ENCODE measurements at regions of chr12 and their contacts with region 1.

Region 1: GRCh38 chr12:110776410-110776809 is 33.7 kb upstream of the PPP1CC start:
- DNase-seq: peak; percentile 43
- H3K4me3 Mint-ChIP-seq: peak overlapping the region; percentile 40
- H3K27ac Mint-ChIP-seq: peak overlapping the region; percentile 99
- H3K4me1 Mint-ChIP-seq: peaks cover 72% of the 10 kb centered on the region
- H3K27me3 Mint-ChIP-seq: no peaks in the 10 kb centered on the region

Region 2: GRCh38 chr12:110065540-110065939 is 710.9 kb before region 1 on chr12:
- intact Hi-C with region 1: loop called (anchors 1 kb)
- DNase-seq: no peak
- H3K4me3 Mint-ChIP-seq: no peak overlapping the region
- H3K27ac Mint-ChIP-seq: peak overlapping the region; percentile 24
- H3K4me1 Mint-ChIP-seq: peaks cover 33% of the 10 kb centered on the region
- H3K27me3 Mint-ChIP-seq: peaks cover 2% of the 10 kb centered on the region

Region 3: GRCh38 chr12:110613771-110614684 is 162.4 kb before region 1 on chr12 and contains the start of gene TCTN1:
- intact Hi-C with region 1: loop called (anchors 1 kb)
- DNase-seq: peak; percentile 98
- H3K4me3 Mint-ChIP-seq: peak within 1 kb of the TSS; percentile 83
- H3K27ac Mint-ChIP-seq: peak within 1 kb of the TSS; percentile 81
- H3K4me1 Mint-ChIP-seq: peaks cover 8% of the 10 kb centered on the region
- H3K27me3 Mint-ChIP-seq: peaks cover 4% of the 10 kb centered on the region
- total RNA-seq, gene TCTN1: 7.6 and 8.8 TPM in 2 replicates

Region 4: GRCh38 chr12:110619534-110619953 is 156.9 kb before region 1 on chr12:
- intact Hi-C with region 1: loop called (anchors 1 kb)
- DNase-seq: no peak
- H3K4me3 Mint-ChIP-seq: peak overlapping the region; percentile 37
- H3K27ac Mint-ChIP-seq: peak overlapping the region; percentile 77
- H3K4me1 Mint-ChIP-seq: peaks cover 10% of the 10 kb centered on the region
- H3K27me3 Mint-ChIP-seq: peaks cover 4% of the 10 kb centered on the region

Region 5: GRCh38 chr12:110762891-110763290 is 13.5 kb before region 1 on chr12:
- intact Hi-C with region 1: loop called (anchors 1 kb)
- DNase-seq: no peak
- H3K4me3 Mint-ChIP-seq: peak overlapping the region; percentile 69
- H3K27ac Mint-ChIP-seq: peak overlapping the region; percentile 90
- H3K4me1 Mint-ChIP-seq: peaks cover 27% of the 10 kb centered on the region
- H3K27me3 Mint-ChIP-seq: peaks cover 5% of the 10 kb centered on the region

Region 6: GRCh38 chr12:110790301-110790700 is 13.9 kb after region 1 on chr12:
- intact Hi-C with region 1: loop called (anchors 1 kb)
- DNase-seq: no peak
- H3K4me3 Mint-ChIP-seq: no peak overlapping the region
- H3K27ac Mint-ChIP-seq: no peak overlapping the region
- H3K4me1 Mint-ChIP-seq: peaks cover 22% of the 10 kb centered on the region
- H3K27me3 Mint-ChIP-seq: no peaks in the 10 kb centered on the region

Region 7: GRCh38 chr12:110813285-110813684 is 36.9 kb after region 1 on chr12:
- intact Hi-C with region 1: no loop called
- DNase-seq: no peak
- H3K4me3 Mint-ChIP-seq: no peak overlapping the region
- H3K27ac Mint-ChIP-seq: no peak overlapping the region
- H3K4me1 Mint-ChIP-seq: peaks cover 8% of the 10 kb centered on the region
- H3K27me3 Mint-ChIP-seq: peaks cover 9% of the 10 kb centered on the region

Region 8: DNA sequence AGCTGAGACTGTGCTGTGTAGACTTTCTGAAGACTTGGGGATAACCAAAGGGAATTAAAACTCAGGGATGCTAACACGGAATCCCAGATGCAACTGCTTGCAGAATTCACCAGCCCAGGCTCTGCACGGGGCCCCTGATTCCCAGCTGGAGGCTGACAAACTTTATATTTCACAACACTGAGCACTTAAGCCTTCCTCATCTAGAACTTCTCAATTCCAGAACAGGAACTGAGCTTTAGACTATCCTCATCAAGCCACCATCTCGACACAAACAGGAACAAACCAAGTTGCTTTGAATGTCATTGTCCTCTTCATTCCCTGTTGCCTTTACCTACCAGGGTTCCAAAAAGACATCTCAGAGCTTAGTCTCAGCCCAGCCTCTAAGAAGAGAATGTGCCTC is 92.6 kb after region 1 on chr12:
- intact Hi-C with region 1: no loop called
- DNase-seq: no peak
- H3K4me3 Mint-ChIP-seq: no peak overlapping the region
- H3K27ac Mint-ChIP-seq: no peak overlapping the region
- H3K4me1 Mint-ChIP-seq: no peaks in the 10 kb centered on the region
- H3K27me3 Mint-ChIP-seq: peaks cover 4% of the 10 kb centered on the region

Region 9: DNA sequence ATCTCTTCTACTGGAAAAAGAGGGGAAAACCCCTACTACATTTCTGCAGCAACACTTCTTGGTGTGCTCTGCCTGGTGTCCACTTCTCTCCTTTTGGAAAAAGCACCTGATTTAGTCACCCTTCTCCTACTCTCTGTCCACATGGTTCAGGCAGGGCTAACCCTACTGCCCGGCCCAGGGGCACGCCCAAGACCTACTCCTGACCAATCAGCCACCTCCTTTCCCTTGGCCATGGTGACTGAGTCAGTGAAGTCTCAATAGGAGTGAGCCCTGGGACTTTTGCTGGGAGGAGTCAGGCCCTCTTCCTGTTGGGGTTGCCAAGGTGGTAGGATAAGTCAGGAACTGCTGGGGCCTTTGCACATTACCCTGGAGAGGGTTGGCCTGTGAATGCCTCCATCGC is 196.5 kb after region 1 on chr12:
- intact Hi-C with region 1: no loop called
- DNase-seq: no peak
- H3K4me3 Mint-ChIP-seq: no peak overlapping the region
- H3K27ac Mint-ChIP-seq: no peak overlapping the region
- H3K4me1 Mint-ChIP-seq: no peaks in the 10 kb centered on the region
- H3K27me3 Mint-ChIP-seq: peaks cover 6% of the 10 kb centered on the region

Region 10: DNA sequence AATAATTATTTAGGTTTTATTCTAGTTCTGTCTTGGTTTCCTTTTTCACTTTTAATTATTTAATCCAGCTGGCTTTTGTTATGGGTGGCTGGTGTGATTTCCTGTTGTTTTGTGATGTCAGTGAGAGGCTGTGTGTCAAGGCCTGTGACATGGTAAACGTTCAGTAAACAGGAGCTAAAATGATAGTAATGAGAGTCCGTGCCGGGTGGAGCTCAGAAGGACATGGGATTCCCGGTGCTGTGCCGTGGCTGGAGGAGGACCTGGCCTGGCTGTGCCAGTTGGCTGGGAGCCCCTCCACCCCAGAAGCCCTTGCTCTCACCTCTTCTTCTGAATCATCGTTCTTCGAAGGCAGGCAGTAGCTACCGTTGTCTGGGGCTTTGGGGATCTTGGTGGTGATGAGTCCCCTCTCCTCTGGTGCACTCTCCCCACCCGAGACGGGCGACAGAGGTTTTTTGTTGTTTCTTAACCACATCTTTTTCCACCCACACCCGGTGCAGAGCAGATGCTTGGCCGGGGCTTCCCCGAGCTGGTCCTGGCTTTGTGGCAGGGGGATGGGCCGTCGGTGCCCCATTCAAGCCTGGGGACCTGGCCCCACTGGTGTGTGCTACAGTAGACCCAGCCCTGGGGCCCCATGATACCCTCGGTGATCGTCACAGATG is 658.4 kb after region 1 on chr12:
- intact Hi-C with region 1: loop called (anchors 10 kb)
- DNase-seq: peak; percentile 83
- H3K4me3 Mint-ChIP-seq: peak overlapping the region; percentile 68
- H3K27ac Mint-ChIP-seq: peak overlapping the region; percentile 97
- H3K4me1 Mint-ChIP-seq: peaks cover 88% of the 10 kb centered on the region
- H3K27me3 Mint-ChIP-seq: no peaks in the 10 kb centered on the region

Region 11: DNA sequence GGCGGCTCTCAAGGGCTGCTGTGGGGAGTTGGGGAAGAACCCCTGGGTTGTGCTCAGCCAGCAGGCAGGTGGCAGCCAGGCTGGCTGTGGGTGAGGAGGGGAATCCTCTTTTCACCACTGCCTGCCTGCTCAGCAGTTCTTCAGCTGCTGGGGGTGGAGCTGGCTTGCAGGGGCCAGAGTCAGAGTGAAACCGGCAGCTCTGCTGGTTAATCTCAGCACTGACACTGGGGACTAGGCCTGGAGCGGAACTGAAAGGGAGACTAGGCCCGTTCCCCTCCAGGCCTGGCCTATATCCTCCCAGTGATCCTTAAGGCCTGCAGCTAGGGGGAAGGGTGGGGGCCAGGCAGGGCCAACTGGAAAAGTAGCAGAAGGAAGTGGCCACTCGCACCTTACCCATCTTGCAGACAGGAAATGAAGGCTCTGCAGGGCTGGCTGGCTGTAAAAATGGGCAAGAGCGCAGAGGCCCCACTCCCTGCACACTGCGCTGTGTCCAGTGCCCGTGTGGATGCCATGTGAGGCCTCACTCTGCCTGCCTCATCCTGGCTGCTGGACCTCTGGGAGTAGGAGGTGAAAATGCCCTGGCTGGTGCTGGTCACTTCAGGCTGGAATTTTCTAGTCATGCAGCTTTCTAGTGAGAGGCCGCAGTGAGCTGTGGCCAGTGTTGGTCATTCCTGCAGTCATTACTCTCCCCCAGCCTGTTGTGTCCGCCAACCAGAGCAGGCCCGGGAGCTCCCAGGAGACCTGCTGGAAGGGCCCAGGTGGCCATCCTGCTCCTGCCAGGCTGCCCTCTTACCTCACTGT is 668.7 kb after region 1 on chr12:
- intact Hi-C with region 1: no loop called
- DNase-seq: peak; percentile 87
- H3K4me3 Mint-ChIP-seq: peak overlapping the region; percentile 71
- H3K27ac Mint-ChIP-seq: peak overlapping the region; percentile 82
- H3K4me1 Mint-ChIP-seq: peaks cover 88% of the 10 kb centered on the region
- H3K27me3 Mint-ChIP-seq: no peaks in the 10 kb centered on the region

Measured in activated T-helper 1 cell treated with anti-CD3 and anti-CD28 coated beads, Interleukin-12 subunit alpha, Interleukin-12 subunit beta, Interleukin-2, Interleukin-4 antibody, amounts not matched to agents 30 ng/mL and 10 ng/mL and 1 ng/mL, durations not matched to agents 14 hours and 24 hours and 36 hours (primary cell).